ENCODE measurements at regions of chr9 and their contacts with region 1.

Region 1: GRCh38 chr9:96344458-96345180 is 38.9 kb downstream of the SLC35D2 start:
- DNase-seq: no peak

Region 2: GRCh38 chr9:94967482-94967881 is 1377.1 kb before region 1 on chr9:
- intact Hi-C with region 1: no loop called
- DNase-seq: no peak

Region 3: DNA sequence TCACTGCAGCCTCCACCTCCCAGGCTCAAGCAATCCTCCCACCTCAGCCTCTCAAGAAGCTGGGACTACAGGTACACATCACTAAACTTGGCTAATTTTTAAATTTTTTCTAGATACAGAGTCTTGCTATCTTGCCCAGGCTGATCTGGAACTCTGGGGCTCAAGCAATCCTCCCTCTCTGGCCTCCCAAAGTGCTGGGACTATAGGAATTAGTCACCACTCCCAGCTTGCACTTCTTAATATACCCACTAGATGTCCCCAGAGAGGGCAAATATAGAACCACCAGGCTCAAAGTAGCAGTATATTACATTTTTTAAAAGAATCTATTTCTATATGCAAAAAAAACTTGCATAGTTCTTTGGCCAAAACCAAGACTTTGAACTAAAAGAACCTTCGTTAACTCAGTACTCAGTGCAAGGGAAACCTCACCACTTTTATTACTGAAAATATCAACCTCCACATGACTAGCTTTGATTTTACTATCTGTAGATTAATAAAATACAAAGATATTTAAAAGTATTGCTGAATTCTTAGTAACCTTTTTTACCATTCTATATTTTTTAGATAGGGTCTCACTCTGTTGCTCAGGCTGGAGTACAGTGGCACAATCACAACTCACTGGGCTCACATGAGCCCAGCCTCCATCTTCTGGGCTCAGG is 16.8 kb before region 1 on chr9:
- intact Hi-C with region 1: no loop called
- DNase-seq: no peak

Region 4: GRCh38 chr9:96418074-96418809 is 73.6 kb after region 1 on chr9 and contains the start of gene ZNF367:
- intact Hi-C with region 1: loop called in 1 of 2 experiments (anchors 10 kb)
- DNase-seq: peak; percentile 99
- total RNA-seq, gene ZNF367: 1.1 to 2.3 TPM

Region 5: DNA sequence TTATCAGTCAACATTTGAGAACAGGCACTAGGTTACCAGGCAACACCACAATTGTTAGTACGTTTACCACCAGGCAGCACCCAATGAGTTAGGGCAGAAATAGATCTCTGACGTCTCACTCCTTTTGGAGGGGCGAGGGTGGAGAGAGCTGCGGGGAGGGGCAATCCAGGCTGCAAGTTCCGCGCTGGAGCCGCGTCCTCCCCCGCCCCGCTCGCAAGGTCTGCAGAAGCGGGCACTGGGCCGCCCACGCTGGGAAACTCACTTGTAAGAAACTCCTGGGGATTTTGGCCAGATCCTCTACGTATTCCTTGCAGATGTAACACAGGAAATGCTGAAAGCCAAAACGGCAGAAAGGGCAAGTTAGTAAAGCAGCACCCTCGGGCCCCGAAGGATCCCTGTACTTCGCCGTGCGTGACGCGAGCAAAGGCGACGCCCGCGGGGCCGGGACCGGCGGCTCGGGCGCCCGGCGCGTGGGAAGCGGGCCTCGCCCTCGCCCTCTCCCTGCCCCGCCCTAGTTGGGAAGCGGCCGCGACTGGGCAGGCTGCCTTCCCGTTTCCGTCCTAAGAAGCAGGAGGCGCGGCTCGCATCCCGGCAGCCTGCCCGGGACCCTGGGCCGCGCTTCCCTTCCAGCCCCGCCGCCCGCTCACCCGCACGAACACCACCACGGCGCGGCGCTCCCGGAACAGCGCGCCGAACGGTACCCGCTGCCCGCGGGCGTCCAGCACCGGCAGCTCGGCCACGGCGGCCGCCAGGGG is 310.0 kb after region 1 on chr9:
- intact Hi-C with region 1: loop called in 1 of 2 experiments (anchors 5 kb)
- DNase-seq: peak; percentile 96

Measured in posterior vena cava (tissue), 2 donors.